ENCODE measurements at regions of chr20 and their contacts with region 1.

Region 1: DNA sequence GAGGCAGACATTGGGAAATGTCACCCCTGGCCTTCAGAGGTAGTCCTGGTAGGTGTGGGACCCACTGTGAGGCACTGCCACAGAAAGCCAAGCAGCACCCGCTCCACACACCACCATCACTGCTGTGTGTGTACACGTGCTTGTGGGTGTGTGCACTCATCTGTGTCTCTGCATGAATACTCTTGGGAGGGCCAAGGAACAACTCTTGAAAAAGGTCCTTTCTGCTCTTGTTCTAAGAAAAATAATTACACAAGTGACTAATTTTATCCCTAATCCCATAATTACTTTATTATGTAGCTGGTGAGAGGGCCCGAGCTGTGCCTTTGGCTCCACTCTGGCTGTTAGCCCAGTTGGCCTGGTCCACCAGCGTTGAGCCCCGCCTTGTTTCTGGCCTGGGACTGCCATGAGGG is 21.7 kb upstream of the EPB41L1 start:
- DNase-seq: no peak
- ATAC-seq: no peak
- H3K4me3 ChIP-seq: no peak overlapping the region
- H3K27ac ChIP-seq: no peak overlapping the region
- H3K4me1 ChIP-seq: no peaks in the 10 kb centered on the region
- H3K27me3 ChIP-seq: no peaks in the 10 kb centered on the region
- CTCF ChIP-seq: no peak

Region 2: GRCh38 chr20:35994994-35995453 is 137.8 kb before region 1 on chr20:
- intact Hi-C with region 1: loop called (anchors 5 kb)
- DNase-seq: peak; percentile 93
- ATAC-seq: peak; percentile 98
- H3K4me3 ChIP-seq: no peak overlapping the region
- H3K27ac ChIP-seq: no peak overlapping the region
- H3K4me1 ChIP-seq: peaks cover 3% of the 10 kb centered on the region
- H3K27me3 ChIP-seq: no peaks in the 10 kb centered on the region
- CTCF ChIP-seq: peak; percentile 90

Region 3: GRCh38 chr20:36070451-36070850 is 62.4 kb before region 1 on chr20:
- intact Hi-C with region 1: loop called (anchors 10 kb)
- DNase-seq: no peak
- ATAC-seq: no peak
- H3K4me3 ChIP-seq: no peak overlapping the region
- H3K27ac ChIP-seq: no peak overlapping the region
- H3K4me1 ChIP-seq: peaks cover 9% of the 10 kb centered on the region
- H3K27me3 ChIP-seq: no peaks in the 10 kb centered on the region
- CTCF ChIP-seq: no peak

Region 4: GRCh38 chr20:36214684-36215256 is 82.0 kb after region 1 on chr20:
- intact Hi-C with region 1: no loop called
- DNase-seq: no peak
- ATAC-seq: no peak
- H3K4me3 ChIP-seq: no peak overlapping the region
- H3K27ac ChIP-seq: no peak overlapping the region
- H3K4me1 ChIP-seq: no peaks in the 10 kb centered on the region
- H3K27me3 ChIP-seq: no peaks in the 10 kb centered on the region
- CTCF ChIP-seq: peak; percentile 40

Measured in upper lobe of right lung (tissue), 1 donor.